ENCODE measurements at regions of chr10 and their contacts with region 1.

Region 1: GRCh38 chr10:91073286-91073979 is 147.0 kb upstream of the PCGF5 start:
- DNase-seq: no peak
- ATAC-seq: no peak
- H3K4me3 Mint-ChIP-seq: no peak overlapping the region
- H3K27ac Mint-ChIP-seq: no peak overlapping the region
- H3K4me1 Mint-ChIP-seq: no peaks in the 10 kb centered on the region
- H3K27me3 Mint-ChIP-seq: peaks cover 6% of the 10 kb centered on the region
- CTCF ChIP-seq: no peak

Region 2: GRCh38 chr10:91034494-91035159 is 38.8 kb before region 1 on chr10:
- CTCF ChIA-PET with region 1: no interaction called
- POLR2A ChIA-PET with region 1: no interaction called
- intact Hi-C with region 1: loop called (anchors 5 kb)
- DNase-seq: no peak
- ATAC-seq: no peak
- H3K4me3 Mint-ChIP-seq: no peak overlapping the region
- H3K27ac Mint-ChIP-seq: no peak overlapping the region
- H3K4me1 Mint-ChIP-seq: peaks cover 11% of the 10 kb centered on the region
- H3K27me3 Mint-ChIP-seq: no peaks in the 10 kb centered on the region
- CTCF ChIP-seq: no peak

Region 3: GRCh38 chr10:91198781-91199180 is 125.3 kb after region 1 on chr10:
- CTCF ChIA-PET with region 1: no interaction called
- POLR2A ChIA-PET with region 1: no interaction called
- intact Hi-C with region 1: no loop called
- DNase-seq: no peak
- ATAC-seq: peak; percentile 23
- H3K4me3 Mint-ChIP-seq: peak overlapping the region; percentile 11
- H3K27ac Mint-ChIP-seq: peak overlapping the region; percentile 86
- H3K4me1 Mint-ChIP-seq: peaks cover 88% of the 10 kb centered on the region
- H3K27me3 Mint-ChIP-seq: no peaks in the 10 kb centered on the region
- CTCF ChIP-seq: no peak

Measured in activated B cell treated with CpG ODN at 0.5 μM for 24 hours (primary cell).